Mammary epithelial cell (primary cell): ENCODE measurements at regions of chr7 and their contacts with region 1.

Region 1: GRCh38 chr7:55432939-55433784 is 68.0 kb downstream of the LANCL2 start:
- DNase-seq: peak; percentile 42
- H3K4me3 ChIP-seq: no peak overlapping the region
- H3K27ac ChIP-seq: no peak overlapping the region
- H3K4me1 ChIP-seq: no peaks in the 10 kb centered on the region
- H3K27me3 ChIP-seq: no peaks in the 10 kb centered on the region
- CTCF ChIP-seq: peak; percentile 41 to 70

Region 2: DNA sequence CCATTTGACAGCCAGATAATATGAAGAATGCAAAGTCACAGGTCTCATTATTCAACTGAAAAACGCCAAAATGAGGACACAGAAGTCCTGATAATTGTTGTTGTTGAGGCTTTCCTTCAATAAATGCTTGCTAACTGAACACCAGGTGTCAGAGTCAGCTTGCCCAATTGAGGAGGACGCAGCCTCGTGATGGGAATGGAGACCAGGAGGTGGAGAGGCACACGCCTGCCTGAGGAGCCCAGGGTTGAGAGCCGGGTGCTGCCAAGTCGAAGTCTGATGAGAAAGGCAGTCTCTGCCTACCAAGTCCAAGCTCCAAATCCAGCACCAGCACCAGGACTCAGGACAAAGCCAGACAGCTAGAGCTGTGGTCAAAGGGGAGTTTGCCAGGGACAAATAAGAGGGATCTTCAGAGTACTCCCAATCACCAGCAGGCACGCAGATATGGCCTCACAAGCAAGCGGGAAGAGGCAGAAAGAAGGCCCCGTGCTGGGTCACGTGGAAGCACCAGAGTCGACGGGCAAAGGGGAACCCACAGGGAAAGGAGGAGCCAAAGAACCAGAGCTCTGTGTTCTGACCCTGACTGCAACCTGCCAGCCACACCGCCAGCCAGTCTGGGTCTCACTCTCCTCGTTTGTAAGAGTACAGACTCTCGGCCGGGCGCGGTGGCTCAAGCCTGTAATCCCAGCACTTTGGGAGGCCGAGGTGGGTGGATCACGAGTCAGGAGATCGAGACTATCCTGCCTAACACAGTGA is 91.6 kb after region 1 on chr7:
- CTCF ChIA-PET with region 1: no interaction called
- dilution Hi-C with region 1: no loop called
- in situ Hi-C with region 1: no loop called
- intact Hi-C with region 1: loop called (anchors 5 kb)
- DNase-seq: no peak
- H3K4me3 ChIP-seq: no peak overlapping the region
- H3K27ac ChIP-seq: no peak overlapping the region
- H3K4me1 ChIP-seq: peaks cover 12% of the 10 kb centered on the region
- H3K27me3 ChIP-seq: no peaks in the 10 kb centered on the region
- CTCF ChIP-seq: peak in 1 of 2 donors; percentile 27

Region 3: GRCh38 chr7:55593515-55594318 is 160.6 kb after region 1 on chr7:
- CTCF ChIA-PET with region 1: no interaction called
- dilution Hi-C with region 1: no loop called
- in situ Hi-C with region 1: loop called in 1 of 2 experiments (anchors 10 kb)
- intact Hi-C with region 1: loop called (anchors 1 kb)
- DNase-seq: peak; percentile 51
- H3K4me3 ChIP-seq: no peak overlapping the region
- H3K27ac ChIP-seq: no peak overlapping the region
- H3K4me1 ChIP-seq: no peaks in the 10 kb centered on the region
- H3K27me3 ChIP-seq: no peaks in the 10 kb centered on the region
- CTCF ChIP-seq: peak; percentile 68 to 95

Region 4: DNA sequence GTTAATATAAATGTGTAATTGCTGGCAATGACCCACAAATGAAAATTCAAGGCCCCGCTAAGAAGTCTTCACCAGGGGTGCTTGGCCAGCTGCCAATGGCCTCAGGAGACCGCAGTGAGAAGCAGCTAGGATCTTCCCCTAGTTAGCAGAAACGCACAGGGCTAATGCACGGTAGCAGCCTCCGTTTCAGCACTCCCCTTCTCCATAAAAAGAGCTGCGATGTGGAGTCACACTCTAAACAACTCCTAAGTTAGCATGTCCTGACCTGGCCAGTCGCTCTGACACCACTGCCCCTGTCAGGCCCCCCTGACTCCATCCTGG is 290.4 kb after region 1 on chr7:
- CTCF ChIA-PET with region 1: no interaction called
- dilution Hi-C with region 1: no loop called
- in situ Hi-C with region 1: no loop called
- intact Hi-C with region 1: loop called (anchors 10 kb)
- DNase-seq: no peak
- H3K4me3 ChIP-seq: no peak overlapping the region
- H3K27ac ChIP-seq: no peak overlapping the region
- H3K4me1 ChIP-seq: no peaks in the 10 kb centered on the region
- H3K27me3 ChIP-seq: no peaks in the 10 kb centered on the region
- CTCF ChIP-seq: no peak